Caco-2 (cell line): ENCODE measurements at regions of chr5 and their contacts with region 1.

Region 1: DNA sequence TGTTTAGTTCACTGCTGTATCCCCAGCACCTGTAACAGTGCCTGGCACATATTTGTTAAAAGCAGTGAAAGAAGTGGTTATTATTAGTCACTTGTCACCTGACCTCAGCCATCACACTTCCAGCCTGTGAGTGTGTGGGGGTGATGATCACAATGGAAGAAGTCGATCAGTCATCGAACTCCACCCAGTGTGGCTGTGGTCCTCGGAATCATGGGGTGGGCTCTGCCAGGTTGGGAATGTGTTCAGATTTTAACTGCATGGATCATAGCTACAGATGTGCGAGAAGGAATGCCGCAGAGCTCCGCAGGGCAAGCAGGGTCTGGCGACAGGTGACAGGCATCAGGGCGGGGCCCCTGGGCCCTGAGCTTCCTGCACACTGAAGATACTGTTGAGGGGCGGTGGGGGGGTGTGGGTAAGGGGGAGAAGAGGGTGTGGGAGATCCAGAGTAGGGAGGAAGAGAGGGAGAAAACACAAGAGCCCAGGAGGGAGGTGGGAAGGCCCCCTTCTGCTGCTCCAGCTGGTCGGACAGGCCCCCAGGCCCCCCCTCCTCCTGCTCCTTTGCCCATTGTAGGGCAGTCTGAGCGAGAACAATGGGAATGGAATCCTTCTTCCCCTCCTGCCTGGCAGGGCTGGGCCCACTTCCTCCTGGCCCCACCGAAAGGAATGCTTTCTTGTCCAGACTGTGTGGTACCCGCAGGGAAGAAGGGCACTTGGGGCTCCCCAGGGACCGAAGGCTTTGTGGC is 89.6 kb downstream of the SPRY4 start:
- DNase-seq: peak; percentile 41 to 65
- H3K4me3 ChIP-seq: no peak overlapping the region
- H3K4me3 Mint-ChIP-seq: peak overlapping the region; percentile 83
- H3K27ac Mint-ChIP-seq: peak overlapping the region; percentile 97
- H3K4me1 ChIP-seq: peaks cover 49% of the 10 kb centered on the region
- H3K4me1 Mint-ChIP-seq: peaks cover 58% of the 10 kb centered on the region
- H3K27me3 ChIP-seq: no peaks in the 10 kb centered on the region
- H3K27me3 Mint-ChIP-seq: no peaks in the 10 kb centered on the region
- CTCF ChIP-seq: no peak

Region 2: GRCh38 chr5:142167458-142167857 is 67.8 kb before region 1 on chr5:
- CTCF ChIA-PET with region 1: no interaction called
- POLR2A ChIA-PET with region 1: no interaction called
- intact Hi-C with region 1: loop called (anchors 5 kb)
- DNase-seq: no peak
- H3K4me3 ChIP-seq: no peak overlapping the region
- H3K4me3 Mint-ChIP-seq: no peak overlapping the region
- H3K27ac Mint-ChIP-seq: no peak overlapping the region
- H3K4me1 ChIP-seq: peaks cover 32% of the 10 kb centered on the region
- H3K4me1 Mint-ChIP-seq: peaks cover 45% of the 10 kb centered on the region
- H3K27me3 ChIP-seq: no peaks in the 10 kb centered on the region
- H3K27me3 Mint-ChIP-seq: no peaks in the 10 kb centered on the region
- CTCF ChIP-seq: no peak

Region 3: GRCh38 chr5:142186857-142187594 is 48.2 kb before region 1 on chr5:
- CTCF ChIA-PET with region 1: no interaction called
- POLR2A ChIA-PET with region 1: interaction called, 5 read pairs
- intact Hi-C with region 1: loop called (anchors 5 kb)
- DNase-seq: peak; percentile 72 to 79
- H3K4me3 ChIP-seq: no peak overlapping the region
- H3K4me3 Mint-ChIP-seq: no peak overlapping the region
- H3K27ac Mint-ChIP-seq: peak overlapping the region; percentile 75
- H3K4me1 ChIP-seq: peaks cover 44% of the 10 kb centered on the region
- H3K4me1 Mint-ChIP-seq: peaks cover 32% of the 10 kb centered on the region
- H3K27me3 ChIP-seq: no peaks in the 10 kb centered on the region
- H3K27me3 Mint-ChIP-seq: no peaks in the 10 kb centered on the region
- CTCF ChIP-seq: no peak

Region 4: DNA sequence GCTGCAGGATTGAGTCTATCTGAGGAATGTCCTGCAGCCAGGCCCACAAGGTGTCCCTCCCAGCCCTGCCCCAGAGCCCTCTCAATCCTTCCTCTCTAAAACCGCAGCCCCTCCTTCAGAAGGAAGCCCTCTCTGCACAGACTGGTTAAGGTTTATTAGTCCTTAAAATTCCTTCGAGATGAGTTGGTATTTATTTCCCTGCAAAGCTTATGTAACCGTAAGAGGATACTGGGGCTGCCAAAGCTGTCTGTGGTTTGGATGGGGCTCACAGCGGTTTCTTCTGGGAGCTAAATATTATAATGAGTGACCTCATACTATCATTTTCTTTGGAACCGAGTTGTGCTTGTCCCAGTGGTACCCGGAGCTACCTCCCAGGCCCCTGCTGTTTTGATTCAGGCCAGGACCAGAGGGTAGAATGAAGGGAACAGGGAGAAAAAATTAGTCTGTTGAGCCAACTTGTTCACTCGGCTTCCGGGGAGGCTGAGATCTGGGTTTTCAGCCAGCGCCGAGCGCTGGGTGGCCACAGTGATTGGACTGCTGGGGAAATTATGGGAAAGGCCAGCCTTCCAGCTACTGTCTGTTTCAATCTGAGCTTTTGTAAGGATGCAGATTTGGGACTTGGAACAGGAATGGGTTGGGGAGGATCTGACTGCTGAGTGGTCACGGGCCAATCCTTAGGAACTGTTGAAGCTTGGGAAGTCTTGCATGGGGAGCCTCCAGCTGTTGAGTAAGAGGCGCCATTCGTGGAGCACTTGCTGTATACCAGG is 19.1 kb before region 1 on chr5:
- CTCF ChIA-PET with region 1: no interaction called
- POLR2A ChIA-PET with region 1: no interaction called
- intact Hi-C with region 1: loop called (anchors 2 kb)
- DNase-seq: peak; percentile 66 to 89
- H3K4me3 ChIP-seq: no peak overlapping the region
- H3K4me3 Mint-ChIP-seq: no peak overlapping the region
- H3K27ac Mint-ChIP-seq: peak overlapping the region; percentile 74
- H3K4me1 ChIP-seq: peaks cover 22% of the 10 kb centered on the region
- H3K4me1 Mint-ChIP-seq: peaks cover 16% of the 10 kb centered on the region
- H3K27me3 ChIP-seq: no peaks in the 10 kb centered on the region
- H3K27me3 Mint-ChIP-seq: no peaks in the 10 kb centered on the region
- CTCF ChIP-seq: peak in 1 of 2 experiments; percentile 6

Region 5: DNA sequence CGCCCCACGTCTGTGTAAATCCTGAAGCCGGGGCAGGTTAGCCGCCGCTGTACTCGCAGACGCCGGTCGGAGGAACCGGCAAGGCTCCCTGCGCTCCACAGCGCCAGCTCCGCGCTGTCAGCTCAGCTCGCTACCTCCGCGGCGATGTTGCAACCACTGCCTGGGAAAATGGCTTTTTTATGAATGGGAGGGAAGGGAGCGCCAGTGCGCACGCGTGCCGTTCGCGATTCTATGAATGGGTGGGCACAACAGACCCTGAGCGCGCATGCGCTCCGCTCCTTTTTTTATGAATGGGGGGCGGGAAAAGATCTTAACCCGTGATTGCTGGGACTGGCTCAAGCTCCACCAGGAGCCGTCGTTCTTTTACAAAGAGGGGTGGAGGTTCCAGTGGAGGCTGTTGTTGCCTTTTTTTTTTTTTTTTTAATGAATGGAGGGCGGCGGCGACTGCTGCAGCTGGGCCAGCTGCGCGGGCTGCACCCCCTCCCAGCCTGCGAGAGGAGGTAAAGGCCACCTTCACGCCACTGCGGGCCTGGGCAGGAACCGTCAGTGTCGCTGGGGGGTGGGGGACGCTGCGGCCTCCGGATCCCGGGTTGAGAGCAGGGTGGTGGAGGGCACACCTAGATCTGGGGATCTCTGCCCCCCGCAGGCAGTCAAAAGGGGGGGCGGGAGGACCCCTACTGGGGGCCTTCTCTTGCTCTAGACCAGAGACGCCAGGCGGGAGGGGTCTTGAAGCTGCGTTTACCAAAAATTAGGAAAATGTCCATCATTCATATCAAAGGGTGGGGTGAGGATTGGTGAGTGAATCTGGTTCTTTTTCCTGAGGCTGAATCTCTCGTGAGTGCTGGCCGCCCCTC is 89.9 kb after region 1 on chr5 and contains the start of gene SPRY4:
- CTCF ChIA-PET with region 1: no interaction called
- POLR2A ChIA-PET with region 1: no interaction called
- intact Hi-C with region 1: loop called (anchors 2 kb)
- DNase-seq: peak; percentile 97 to 98
- H3K4me3 ChIP-seq: peak within 1 kb of the TSS; percentile 83
- H3K4me3 Mint-ChIP-seq: peak within 1 kb of the TSS; percentile 89
- H3K27ac Mint-ChIP-seq: peak within 1 kb of the TSS; percentile 86
- H3K4me1 ChIP-seq: peaks cover 39% of the 10 kb centered on the region
- H3K4me1 Mint-ChIP-seq: peaks cover 41% of the 10 kb centered on the region
- H3K27me3 ChIP-seq: no peaks in the 10 kb centered on the region
- H3K27me3 Mint-ChIP-seq: no peaks in the 10 kb centered on the region
- CTCF ChIP-seq: peak in 1 of 2 experiments; percentile 17
- total RNA-seq, gene SPRY4: 7.7 and 8.3 TPM in 2 replicates